Transverse colon (tissue), 4 donors: ENCODE measurements at regions of chr15 and their contacts with region 1.

Region 1: DNA sequence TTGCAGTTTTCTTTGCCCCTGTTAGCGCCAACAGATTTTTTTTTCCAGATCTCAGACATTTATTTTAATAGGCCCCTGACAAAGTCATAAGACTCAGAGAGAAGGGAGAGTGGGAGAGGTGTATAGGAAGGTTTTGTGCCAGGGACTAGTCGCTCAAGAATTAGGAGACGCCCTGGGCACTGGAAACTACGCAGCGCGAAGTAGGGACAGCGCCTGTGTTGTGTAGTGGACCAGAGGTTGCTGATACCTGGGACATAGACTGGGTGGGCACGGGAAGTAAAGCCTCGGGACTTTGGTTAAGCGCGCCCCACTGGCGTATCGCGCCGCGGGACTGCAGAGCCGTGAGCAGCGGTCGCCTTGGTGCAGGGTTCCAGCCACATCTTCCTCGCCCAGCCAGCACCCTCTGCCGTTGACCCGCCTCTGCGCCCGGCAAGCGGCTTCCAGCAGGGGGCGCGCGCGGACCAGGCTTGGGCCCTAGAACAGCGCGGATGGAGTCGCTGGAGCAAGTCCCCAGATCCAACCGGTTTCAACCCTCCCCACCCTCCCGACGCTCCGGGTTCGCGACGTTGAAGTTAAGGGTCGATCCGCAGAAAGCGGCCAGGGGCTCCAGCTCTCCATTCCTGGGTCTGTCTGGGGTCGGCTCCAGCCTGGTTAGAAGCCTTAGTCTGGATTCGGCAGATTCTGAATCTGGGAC is 3.0 kb upstream of the ISLR2 start:
- DNase-seq: peak; percentile 87
- H3K4me3 ChIP-seq: peak overlapping the region in 3 of 4 donors; percentile 15 to 33 (median 29)
- H3K27ac ChIP-seq: no peak overlapping the region
- H3K4me1 ChIP-seq: peaks cover 3 to 21% (median 8%) of the 10 kb centered on the region in 4 donors
- H3K27me3 ChIP-seq: peaks cover 86% of the 10 kb centered on the region
- CTCF ChIP-seq: peak; percentile 89 to 98 (median 97)
- EP300 ChIP-seq: no peak
- POLR2A ChIP-seq: no peak

Region 2: DNA sequence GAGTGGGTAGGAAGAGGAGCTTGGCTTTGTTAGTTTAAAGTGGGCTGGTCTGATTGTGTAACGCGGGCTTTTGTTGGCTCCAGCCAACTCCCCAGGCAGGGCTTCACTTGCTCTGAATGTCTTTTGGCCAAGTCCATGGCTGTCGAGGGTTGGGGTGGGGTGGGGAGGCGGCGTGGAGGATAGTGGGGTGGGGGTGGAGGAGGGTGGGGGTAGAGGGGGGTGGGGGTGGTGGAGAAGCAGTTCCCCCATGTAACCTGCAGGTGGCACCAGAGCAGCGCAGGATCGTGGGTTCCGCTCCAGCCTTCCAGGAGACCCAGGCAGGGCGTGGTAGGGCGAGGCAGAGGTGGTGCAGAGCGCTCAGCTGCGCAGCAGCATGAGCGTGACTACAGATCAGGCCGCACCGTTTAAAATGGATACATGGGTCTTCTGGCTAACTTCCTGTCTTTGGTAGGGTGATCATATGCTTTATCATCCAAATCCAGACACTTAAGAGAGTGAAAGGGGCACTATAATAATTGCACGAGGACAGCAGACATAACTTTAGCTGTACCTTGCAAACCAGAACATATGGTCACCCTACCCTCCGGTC is 73.4 kb before region 1 on chr15:
- in situ Hi-C with region 1: loop called in 1 of 4 experiments (anchors 10 kb)
- intact Hi-C with region 1: no loop called
- DNase-seq: peak; percentile 80
- H3K4me3 ChIP-seq: no peak overlapping the region
- H3K27ac ChIP-seq: peak overlapping the region in 2 of 4 donors; percentile 41 to 57
- H3K4me1 ChIP-seq: peaks cover 10 to 38% (median 23%) of the 10 kb centered on the region in 4 donors
- H3K27me3 ChIP-seq: no peaks in the 10 kb centered on the region
- CTCF ChIP-seq: peak; percentile 18 to 78 (median 61)
- EP300 ChIP-seq: no peak
- POLR2A ChIP-seq: no peak

Region 3: GRCh38 chr15:74144153-74144775 is 16.9 kb after region 1 on chr15:
- in situ Hi-C with region 1: no loop called
- intact Hi-C with region 1: no loop called
- DNase-seq: no peak
- H3K4me3 ChIP-seq: no peak overlapping the region
- H3K27ac ChIP-seq: no peak overlapping the region
- H3K4me1 ChIP-seq: no peaks in the 10 kb centered on the region
- H3K27me3 ChIP-seq: peaks cover 43% of the 10 kb centered on the region
- CTCF ChIP-seq: no peak
- EP300 ChIP-seq: no peak
- POLR2A ChIP-seq: no peak

Region 4: GRCh38 chr15:74307827-74308644 is 180.6 kb after region 1 on chr15:
- in situ Hi-C with region 1: loop called (anchors 5 to 25 kb)
- intact Hi-C with region 1: loop called (anchors 1 kb)
- DNase-seq: peak; percentile 45
- H3K4me3 ChIP-seq: no peak overlapping the region
- H3K27ac ChIP-seq: no peak overlapping the region
- H3K4me1 ChIP-seq: no peaks in the 10 kb centered on the region
- H3K27me3 ChIP-seq: peaks cover 58% of the 10 kb centered on the region
- CTCF ChIP-seq: peak; percentile 29 to 61 (median 50)
- EP300 ChIP-seq: no peak
- POLR2A ChIP-seq: no peak